Activated naive CD4-positive, alpha-beta T cell treated with anti-CD3 and anti-CD28 coated beads for 36 hours (primary cell): ENCODE measurements at regions of chr11 and their contacts with region 1.

Region 1: DNA sequence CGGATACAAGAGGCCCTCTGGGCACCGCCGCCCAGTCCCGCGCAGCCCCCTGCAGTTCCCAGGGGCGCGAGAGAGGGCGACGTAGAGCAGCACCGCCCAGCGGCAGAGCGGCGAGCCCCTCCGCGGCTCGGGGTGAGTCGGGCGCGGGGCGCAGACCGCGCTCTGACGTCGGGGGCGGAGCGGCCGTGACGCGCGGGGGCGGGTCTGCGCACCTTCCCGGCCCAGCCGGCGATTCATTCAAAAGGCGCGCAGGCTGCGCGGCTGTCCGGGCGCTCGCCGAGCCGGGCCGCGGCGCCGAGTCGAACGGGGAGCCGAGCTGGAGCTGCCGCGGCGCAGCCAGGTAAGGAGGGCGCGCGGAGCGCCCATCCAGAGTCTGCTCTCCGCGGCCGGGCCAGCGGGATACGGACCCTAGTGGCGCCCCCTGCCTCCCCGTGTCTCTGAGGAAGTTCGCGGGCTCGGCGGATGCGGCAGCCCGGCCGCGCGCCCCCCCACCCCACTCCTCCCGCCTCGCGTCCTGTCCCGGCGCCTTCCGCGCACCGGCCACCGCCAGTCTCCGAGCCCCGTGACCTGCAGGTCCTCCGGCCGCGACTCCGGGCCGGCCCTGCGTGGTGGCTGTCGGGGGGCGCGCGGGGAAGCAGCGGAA is at the start of gene RELT:
- DNase-seq: peak; percentile 91
- H3K4me3 Mint-ChIP-seq: peak within 1 kb of the TSS; percentile 92
- H3K27ac Mint-ChIP-seq: peak within 1 kb of the TSS; percentile 91
- H3K4me1 Mint-ChIP-seq: peaks cover 45% of the 10 kb centered on the region
- H3K27me3 Mint-ChIP-seq: no peaks in the 10 kb centered on the region
- total RNA-seq, gene RELT: 17.9 to 18.5 TPM

Region 2: GRCh38 chr11:73141848-73142286 is 234.4 kb before region 1 on chr11:
- CTCF ChIA-PET with region 1: no interaction called
- intact Hi-C with region 1: loop called (anchors 1 kb)
- DNase-seq: peak; percentile 64
- H3K4me3 Mint-ChIP-seq: peak overlapping the region; percentile 96
- H3K27ac Mint-ChIP-seq: peak overlapping the region; percentile 92
- H3K4me1 Mint-ChIP-seq: peaks cover 42% of the 10 kb centered on the region
- H3K27me3 Mint-ChIP-seq: no peaks in the 10 kb centered on the region

Region 3: GRCh38 chr11:73350908-73351636 is 25.2 kb before region 1 on chr11:
- CTCF ChIA-PET with region 1: interaction called, 36 read pairs
- intact Hi-C with region 1: loop called (anchors 1 kb)
- DNase-seq: peak; percentile 73
- H3K4me3 Mint-ChIP-seq: no peak overlapping the region
- H3K27ac Mint-ChIP-seq: peak overlapping the region; percentile 38
- H3K4me1 Mint-ChIP-seq: no peaks in the 10 kb centered on the region
- H3K27me3 Mint-ChIP-seq: no peaks in the 10 kb centered on the region

Region 4: GRCh38 chr11:73393479-73394380 is 17.4 kb after region 1 on chr11:
- CTCF ChIA-PET with region 1: interaction called, 7 read pairs
- intact Hi-C with region 1: loop called (anchors 1 kb)
- DNase-seq: peak; percentile 82
- H3K4me3 Mint-ChIP-seq: no peak overlapping the region
- H3K27ac Mint-ChIP-seq: no peak overlapping the region
- H3K4me1 Mint-ChIP-seq: no peaks in the 10 kb centered on the region
- H3K27me3 Mint-ChIP-seq: no peaks in the 10 kb centered on the region

Region 5: DNA sequence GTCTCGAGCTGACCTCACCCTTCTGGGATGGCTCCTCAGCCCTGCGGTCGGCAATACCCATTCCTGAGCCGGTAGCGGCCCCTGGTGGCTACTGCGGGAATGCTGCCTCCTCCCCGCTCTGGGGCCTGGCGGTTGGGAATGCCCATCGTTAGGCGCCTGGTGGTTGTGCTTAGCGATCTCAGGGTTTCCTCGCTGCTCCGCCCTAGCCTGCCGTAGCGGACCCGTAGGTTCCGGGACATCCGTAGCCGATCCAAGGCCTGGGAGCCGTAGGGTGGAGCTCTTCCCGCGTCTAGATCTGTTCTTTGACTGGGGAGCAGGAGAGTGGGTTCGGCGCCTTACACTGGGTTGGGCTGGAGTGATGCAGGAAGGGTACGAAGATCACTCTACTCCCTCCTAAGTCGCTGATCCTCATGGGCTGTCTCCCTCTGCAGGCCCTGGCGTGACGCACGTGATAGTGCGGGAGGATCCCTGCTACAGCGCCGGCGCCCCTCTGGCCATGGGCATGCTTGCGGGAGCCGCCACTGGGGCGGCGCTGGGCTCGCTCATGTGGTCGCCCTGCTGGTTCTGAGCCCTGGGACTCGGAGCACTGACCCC is 284.9 kb after region 1 on chr11:
- CTCF ChIA-PET with region 1: no interaction called
- intact Hi-C with region 1: loop called (anchors 1 kb)
- DNase-seq: peak; percentile 93
- H3K4me3 Mint-ChIP-seq: peak overlapping the region; percentile 45
- H3K27ac Mint-ChIP-seq: no peak overlapping the region
- H3K4me1 Mint-ChIP-seq: peaks cover 6% of the 10 kb centered on the region
- H3K27me3 Mint-ChIP-seq: no peaks in the 10 kb centered on the region

Region 6: DNA sequence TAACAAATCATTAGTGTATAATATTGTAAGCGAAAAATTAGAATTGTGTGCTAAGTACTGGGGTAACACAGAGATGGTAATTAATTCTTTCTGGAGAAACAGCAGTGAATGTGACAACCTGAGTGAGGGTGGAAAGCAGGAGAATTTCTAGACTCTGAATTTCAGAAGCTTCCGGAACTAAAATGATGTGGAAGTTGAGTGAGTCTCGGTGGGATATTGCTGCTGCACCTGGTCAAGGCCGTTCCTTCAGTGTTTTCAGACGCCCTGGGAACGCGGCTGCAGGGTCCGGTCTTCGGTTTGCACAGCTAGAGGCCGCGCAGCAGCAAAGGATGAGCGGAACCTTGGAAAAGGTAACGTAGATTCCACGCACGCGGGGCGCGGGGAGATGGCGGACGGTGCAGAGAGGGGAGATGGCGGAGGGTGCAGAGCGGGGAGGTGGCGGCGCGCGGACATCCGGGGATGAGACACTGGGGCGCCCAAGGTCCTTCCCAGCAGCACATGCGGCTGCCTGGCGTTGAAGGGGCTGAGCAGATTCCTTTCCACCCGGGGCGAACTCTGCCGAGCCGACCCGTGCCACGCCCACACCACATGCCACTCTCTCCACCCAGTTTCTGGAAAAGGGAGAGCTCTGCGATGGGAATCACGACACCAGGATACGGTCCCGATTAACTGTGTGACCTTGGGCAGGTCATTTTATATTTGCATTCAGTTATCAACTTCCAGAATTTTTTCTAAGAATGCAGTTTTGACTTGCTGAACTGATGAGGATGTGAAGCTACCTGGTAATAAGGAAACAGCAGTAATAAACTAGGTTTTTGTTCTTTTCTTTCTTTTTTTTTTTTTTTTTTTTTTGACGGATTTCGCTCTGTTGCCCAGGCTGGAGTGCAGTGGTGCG is 411.6 kb after region 1 on chr11 and contains the start of gene MRPL48:
- CTCF ChIA-PET with region 1: no interaction called
- intact Hi-C with region 1: loop called (anchors 5 kb)
- DNase-seq: peak; percentile 94
- H3K4me3 Mint-ChIP-seq: peak within 1 kb of the TSS; percentile 97
- H3K27ac Mint-ChIP-seq: peak within 1 kb of the TSS; percentile 98
- H3K4me1 Mint-ChIP-seq: peaks cover 13% of the 10 kb centered on the region
- H3K27me3 Mint-ChIP-seq: no peaks in the 10 kb centered on the region
- total RNA-seq, gene MRPL48: 49.2 to 53.5 TPM